ENCODE measurements at regions of chr15 and their contacts with region 1.

Region 1: GRCh38 chr15:25251700-25252390 is 187.0 kb downstream of the UBE3A start:
- DNase-seq: peak in 3 of 14 experiments; percentile 2 to 25 (median 7)
- ATAC-seq: no peak
- H3K4me3 ChIP-seq: no peak overlapping the region
- H3K4me3 Mint-ChIP-seq: no peak overlapping the region
- H3K27ac ChIP-seq: no peak overlapping the region
- H3K27ac Mint-ChIP-seq: no peak overlapping the region
- H3K4me1 ChIP-seq: no peaks in the 10 kb centered on the region
- H3K4me1 Mint-ChIP-seq: no peaks in the 10 kb centered on the region
- H3K27me3 ChIP-seq: no peaks in the 10 kb centered on the region
- H3K27me3 Mint-ChIP-seq: no peaks in the 10 kb centered on the region
- CTCF ChIP-seq: no peak

Region 2: GRCh38 chr15:25192651-25193050 is 59.2 kb before region 1 on chr15:
- CTCF ChIA-PET with region 1: no interaction called
- POLR2A ChIA-PET with region 1: no interaction called
- intact Hi-C with region 1: loop called in 1 of 2 experiments (anchors 10 kb)
- DNase-seq: no peak
- ATAC-seq: no peak
- H3K4me3 ChIP-seq: no peak overlapping the region
- H3K4me3 Mint-ChIP-seq: no peak overlapping the region
- H3K27ac ChIP-seq: no peak overlapping the region
- H3K27ac Mint-ChIP-seq: no peak overlapping the region
- H3K4me1 ChIP-seq: no peaks in the 10 kb centered on the region
- H3K4me1 Mint-ChIP-seq: no peaks in the 10 kb centered on the region
- H3K27me3 ChIP-seq: no peaks in the 10 kb centered on the region
- H3K27me3 Mint-ChIP-seq: no peaks in the 10 kb centered on the region
- CTCF ChIP-seq: no peak

Region 3: GRCh38 chr15:25596644-25597562 is 345.1 kb after region 1 on chr15:
- CTCF ChIA-PET with region 1: no interaction called
- POLR2A ChIA-PET with region 1: no interaction called
- intact Hi-C with region 1: no loop called
- DNase-seq: no peak
- ATAC-seq: no peak
- H3K4me3 ChIP-seq: no peak overlapping the region
- H3K4me3 Mint-ChIP-seq: no peak overlapping the region
- H3K27ac ChIP-seq: no peak overlapping the region
- H3K27ac Mint-ChIP-seq: no peak overlapping the region
- H3K4me1 ChIP-seq: no peaks in the 10 kb centered on the region
- H3K4me1 Mint-ChIP-seq: no peaks in the 10 kb centered on the region
- H3K27me3 ChIP-seq: no peaks in the 10 kb centered on the region
- H3K27me3 Mint-ChIP-seq: no peaks in the 10 kb centered on the region
- CTCF ChIP-seq: no peak

Measured in CD4-positive, alpha-beta T cell (primary cell).